ENCODE measurements at regions of chr2 and their contacts with region 1.

Region 1: GRCh38 chr2:106098081-106098480 is 96.0 kb downstream of the UXS1 start:
- DNase-seq: peak in 5 of 14 experiments; percentile 20 to 58 (median 36)
- ATAC-seq: no peak
- H3K4me3 ChIP-seq: no peak overlapping the region
- H3K4me3 Mint-ChIP-seq: no peak overlapping the region
- H3K27ac ChIP-seq: no peak overlapping the region
- H3K27ac Mint-ChIP-seq: peak overlapping the region; percentile 95
- H3K4me1 ChIP-seq: peaks cover 47% of the 10 kb centered on the region
- H3K4me1 Mint-ChIP-seq: peaks cover 55% of the 10 kb centered on the region
- H3K27me3 ChIP-seq: no peaks in the 10 kb centered on the region
- H3K27me3 Mint-ChIP-seq: no peaks in the 10 kb centered on the region
- CTCF ChIP-seq: no peak

Region 2: DNA sequence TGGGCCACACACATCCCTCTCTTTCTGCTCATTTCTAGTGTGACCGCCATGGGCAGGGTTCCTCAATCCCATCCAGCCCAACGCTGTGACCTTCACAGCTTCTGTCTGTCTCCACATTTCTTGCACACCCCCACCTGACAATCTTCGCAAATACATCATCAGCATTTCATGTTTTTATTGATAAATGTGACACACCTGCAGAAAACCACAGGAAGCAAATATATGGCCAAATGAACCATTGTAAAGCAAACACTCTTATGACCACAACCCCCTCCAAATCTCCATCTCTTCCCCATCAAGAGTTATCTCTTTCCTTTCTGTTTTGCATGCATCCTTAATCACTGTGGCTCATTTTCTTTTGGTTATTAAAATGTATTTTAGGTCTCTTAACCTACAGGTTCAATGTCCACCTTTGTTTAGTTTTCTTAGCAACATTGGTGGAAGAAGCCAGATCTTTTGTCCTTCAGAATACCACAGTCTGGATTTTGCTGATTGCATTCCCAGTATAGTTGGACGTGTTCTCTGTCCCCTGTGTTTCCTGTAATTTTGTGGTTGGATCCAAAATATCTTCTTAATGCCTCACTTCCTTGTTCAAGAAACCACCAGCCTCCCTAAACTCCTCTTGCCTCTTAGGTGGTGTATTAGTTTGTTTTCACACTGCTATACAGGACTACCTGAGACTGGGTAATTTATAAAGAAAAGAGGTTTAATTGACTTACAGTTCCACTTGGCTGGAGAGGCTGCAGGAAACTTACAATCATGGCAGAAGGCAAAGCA is 363.1 kb before region 1 on chr2:
- CTCF ChIA-PET with region 1: no interaction called
- POLR2A ChIA-PET with region 1: interaction called, 14 read pairs
- intact Hi-C with region 1: no loop called
- DNase-seq: no peak
- ATAC-seq: no peak
- H3K4me3 ChIP-seq: no peak overlapping the region
- H3K4me3 Mint-ChIP-seq: no peak overlapping the region
- H3K27ac ChIP-seq: no peak overlapping the region
- H3K27ac Mint-ChIP-seq: no peak overlapping the region
- H3K4me1 ChIP-seq: peaks cover 47% of the 10 kb centered on the region
- H3K4me1 Mint-ChIP-seq: peaks cover 54% of the 10 kb centered on the region
- H3K27me3 ChIP-seq: no peaks in the 10 kb centered on the region
- H3K27me3 Mint-ChIP-seq: no peaks in the 10 kb centered on the region
- CTCF ChIP-seq: no peak

Region 3: GRCh38 chr2:105749583-105750400 is 348.3 kb before region 1 on chr2:
- CTCF ChIA-PET with region 1: interaction called, 4 read pairs
- POLR2A ChIA-PET with region 1: interaction called, 38 read pairs
- intact Hi-C with region 1: loop called in 1 of 2 experiments (anchors 5 kb)
- DNase-seq: peak in 5 of 14 experiments; percentile 24 to 61 (median 56)
- ATAC-seq: peak; percentile 2
- H3K4me3 ChIP-seq: peak overlapping the region; percentile 87
- H3K4me3 Mint-ChIP-seq: peak overlapping the region; percentile 83
- H3K27ac ChIP-seq: peak overlapping the region; percentile 52
- H3K27ac Mint-ChIP-seq: peak overlapping the region; percentile 98
- H3K4me1 ChIP-seq: peaks cover 78% of the 10 kb centered on the region
- H3K4me1 Mint-ChIP-seq: peaks cover 92% of the 10 kb centered on the region
- H3K27me3 ChIP-seq: no peaks in the 10 kb centered on the region
- H3K27me3 Mint-ChIP-seq: no peaks in the 10 kb centered on the region
- CTCF ChIP-seq: no peak

Region 4: GRCh38 chr2:105797298-105797819 is 300.7 kb before region 1 on chr2:
- CTCF ChIA-PET with region 1: interaction called, 7 read pairs
- POLR2A ChIA-PET with region 1: interaction called, 24 read pairs
- intact Hi-C with region 1: loop called (anchors 5 kb)
- DNase-seq: peak in 4 of 14 experiments; percentile 51 to 84 (median 68)
- ATAC-seq: peak; percentile 24
- H3K4me3 ChIP-seq: peak overlapping the region; percentile 13
- H3K4me3 Mint-ChIP-seq: peak overlapping the region; percentile 77
- H3K27ac ChIP-seq: peak overlapping the region; percentile 52 to 81
- H3K27ac Mint-ChIP-seq: peak overlapping the region; percentile 98
- H3K4me1 ChIP-seq: peaks cover 88% of the 10 kb centered on the region
- H3K4me1 Mint-ChIP-seq: peaks cover 92% of the 10 kb centered on the region
- H3K27me3 ChIP-seq: no peaks in the 10 kb centered on the region
- H3K27me3 Mint-ChIP-seq: no peaks in the 10 kb centered on the region
- CTCF ChIP-seq: no peak

Region 5: DNA sequence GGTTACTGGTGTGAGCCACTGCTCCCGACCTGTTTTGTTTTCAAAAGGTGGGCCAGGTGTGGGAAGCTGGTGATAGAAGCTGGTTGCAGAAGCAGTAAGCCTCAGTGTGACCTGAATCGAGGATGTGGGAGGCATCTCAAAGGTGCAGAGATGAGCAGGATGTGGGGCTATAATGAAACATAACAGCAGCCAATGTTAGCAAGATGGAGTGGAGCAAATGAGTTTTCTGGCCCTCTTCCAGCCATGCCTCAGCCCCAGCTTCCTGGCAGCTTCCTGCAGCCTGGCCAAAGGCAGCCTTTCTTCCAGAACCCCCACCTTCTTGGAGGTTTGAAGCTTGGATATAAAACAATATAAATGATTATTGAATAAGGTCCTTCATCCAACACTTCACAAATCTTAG is 168.6 kb before region 1 on chr2:
- CTCF ChIA-PET with region 1: interaction called, 6 read pairs
- POLR2A ChIA-PET with region 1: interaction called, 30 read pairs
- intact Hi-C with region 1: loop called in 1 of 2 experiments (anchors 5 kb)
- DNase-seq: peak; percentile 8 to 89 (median 52)
- ATAC-seq: peak; percentile 82
- H3K4me3 ChIP-seq: no peak overlapping the region
- H3K4me3 Mint-ChIP-seq: peak overlapping the region; percentile 47
- H3K27ac ChIP-seq: peak overlapping the region; percentile 19 to 42
- H3K27ac Mint-ChIP-seq: peak overlapping the region; percentile 81
- H3K4me1 ChIP-seq: peaks cover 95% of the 10 kb centered on the region
- H3K4me1 Mint-ChIP-seq: peaks cover 62% of the 10 kb centered on the region
- H3K27me3 ChIP-seq: no peaks in the 10 kb centered on the region
- H3K27me3 Mint-ChIP-seq: no peaks in the 10 kb centered on the region
- CTCF ChIP-seq: no peak

Region 6: GRCh38 chr2:106085181-106085940 is 12.7 kb before region 1 on chr2:
- CTCF ChIA-PET with region 1: interaction called, 27 read pairs
- POLR2A ChIA-PET with region 1: interaction called, 64 read pairs
- intact Hi-C with region 1: loop called in 1 of 2 experiments (anchors 1 kb)
- DNase-seq: peak in 13 of 14 experiments; percentile 40 to 86 (median 60)
- ATAC-seq: peak; percentile 90
- H3K4me3 ChIP-seq: peak overlapping the region; percentile 9
- H3K4me3 Mint-ChIP-seq: peak overlapping the region; percentile 50
- H3K27ac ChIP-seq: peak overlapping the region; percentile 56 to 59
- H3K27ac Mint-ChIP-seq: peak overlapping the region; percentile 95
- H3K4me1 ChIP-seq: peaks cover 35% of the 10 kb centered on the region
- H3K4me1 Mint-ChIP-seq: peaks cover 73% of the 10 kb centered on the region
- H3K27me3 ChIP-seq: no peaks in the 10 kb centered on the region
- H3K27me3 Mint-ChIP-seq: no peaks in the 10 kb centered on the region
- CTCF ChIP-seq: peak; percentile 61